ENCODE measurements at regions of chr9 and their contacts with region 1.

Region 1: GRCh38 chr9:101527066-101527465 is 6.6 kb upstream of the RNF20 start:
- DNase-seq: no peak
- H3K4me3 ChIP-seq: no peak overlapping the region
- H3K27ac ChIP-seq: no peak overlapping the region
- H3K4me1 ChIP-seq: no peaks in the 10 kb centered on the region
- H3K27me3 ChIP-seq: no peaks in the 10 kb centered on the region
- CTCF ChIP-seq: no peak

Region 2: DNA sequence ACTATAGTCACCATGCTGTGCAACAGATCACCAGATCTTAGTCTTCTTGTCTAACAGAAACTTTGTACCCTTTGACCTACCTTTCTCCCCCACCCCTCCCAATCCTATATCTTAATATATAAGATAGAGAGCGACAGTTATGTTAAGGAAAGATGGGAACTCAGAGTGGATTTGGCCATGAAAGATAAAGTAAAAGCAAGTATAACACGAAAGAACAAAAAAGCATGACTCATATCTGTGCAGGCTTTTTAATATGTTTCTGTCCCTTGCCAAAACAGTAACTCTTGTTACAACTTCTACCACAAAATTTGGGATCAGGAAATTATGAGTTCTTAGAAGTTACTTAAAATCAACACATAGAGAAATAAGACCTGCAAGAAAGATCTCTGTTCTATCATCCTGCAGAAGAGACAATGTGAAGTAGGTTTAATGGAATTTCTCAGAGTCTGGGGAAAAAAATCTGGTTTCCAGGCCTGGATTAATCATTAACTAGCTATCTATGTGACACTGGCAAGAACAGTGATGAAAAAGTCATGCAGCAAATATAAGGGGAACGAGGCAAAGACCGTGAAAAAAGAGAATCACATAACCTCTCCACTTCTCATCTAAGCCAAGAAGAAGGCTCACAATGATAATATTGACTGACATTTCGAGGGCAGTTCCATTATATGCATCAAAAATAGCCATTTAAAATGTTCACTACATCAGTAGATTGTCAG is 160.9 kb before region 1 on chr9:
- intact Hi-C with region 1: no loop called
- DNase-seq: peak in 1 of 5 donors; percentile 23
- H3K4me3 ChIP-seq: peak overlapping the region in 1 of 3 donors; percentile 23
- H3K27ac ChIP-seq: no peak overlapping the region
- H3K4me1 ChIP-seq: no peaks in the 10 kb centered on the region
- H3K27me3 ChIP-seq: no peaks in the 10 kb centered on the region
- CTCF ChIP-seq: no peak

Region 3: DNA sequence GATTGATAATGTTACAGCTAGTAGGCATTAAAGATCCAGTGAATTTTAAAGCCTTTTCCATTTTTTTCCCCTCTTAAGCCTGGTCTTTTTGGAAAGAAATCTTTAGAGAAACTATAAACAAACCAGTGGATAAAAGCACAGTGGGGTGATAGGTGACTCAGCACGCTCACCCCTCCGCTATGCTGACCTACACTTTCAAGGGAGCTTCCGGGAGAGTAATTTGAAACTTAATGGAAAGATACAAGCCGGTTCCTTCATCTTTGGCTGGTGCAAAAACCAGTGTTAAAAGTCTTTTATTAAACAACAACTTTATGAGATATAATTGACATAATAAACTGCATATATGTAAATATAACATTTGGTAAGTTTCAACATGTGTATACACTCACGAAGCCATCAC is 64.5 kb before region 1 on chr9:
- intact Hi-C with region 1: loop called (anchors 5 kb)
- DNase-seq: peak in 2 of 5 donors; percentile 33 to 37
- H3K4me3 ChIP-seq: no peak overlapping the region
- H3K27ac ChIP-seq: no peak overlapping the region
- H3K4me1 ChIP-seq: no peaks in the 10 kb centered on the region
- H3K27me3 ChIP-seq: no peaks in the 10 kb centered on the region
- CTCF ChIP-seq: no peak

Region 4: GRCh38 chr9:101705135-101705661 is 178.1 kb after region 1 on chr9:
- intact Hi-C with region 1: no loop called
- DNase-seq: peak; percentile 27 to 61 (median 53)
- H3K4me3 ChIP-seq: peak overlapping the region; percentile 44 to 51 (median 46)
- H3K27ac ChIP-seq: no peak overlapping the region
- H3K4me1 ChIP-seq: no peaks in the 10 kb centered on the region
- H3K27me3 ChIP-seq: no peaks in the 10 kb centered on the region
- CTCF ChIP-seq: no peak

Measured in kidney (tissue), 22 donors.